ENCODE measurements at regions of chr19 and their contacts with region 1.

Region 1: GRCh38 chr19:58362272-58362994 is at the start of gene ZNF497:
- DNase-seq: peak; percentile 99
- ATAC-seq: peak; percentile 83
- H3K4me3 ChIP-seq: peak within 1 kb of the TSS; percentile 69 to 90 (median 74)
- H3K4me3 Mint-ChIP-seq: peak within 1 kb of the TSS; percentile 95
- H3K27ac ChIP-seq: peak within 1 kb of the TSS; percentile 80 to 81
- H3K27ac Mint-ChIP-seq: peak within 1 kb of the TSS; percentile 97
- H3K4me1 ChIP-seq: peaks cover 11 to 30% of the 10 kb centered on the region in 2 donors
- H3K4me1 Mint-ChIP-seq: peaks cover 17% of the 10 kb centered on the region
- H3K27me3 ChIP-seq: peaks cover 0 to 13% (median 5%) of the 10 kb centered on the region in 4 experiments
- H3K27me3 Mint-ChIP-seq: peaks cover 3% of the 10 kb centered on the region
- CTCF ChIP-seq: no peak
- total RNA-seq, gene ZNF497: 2.7 and 4.4 TPM in 2 replicates

Region 2: DNA sequence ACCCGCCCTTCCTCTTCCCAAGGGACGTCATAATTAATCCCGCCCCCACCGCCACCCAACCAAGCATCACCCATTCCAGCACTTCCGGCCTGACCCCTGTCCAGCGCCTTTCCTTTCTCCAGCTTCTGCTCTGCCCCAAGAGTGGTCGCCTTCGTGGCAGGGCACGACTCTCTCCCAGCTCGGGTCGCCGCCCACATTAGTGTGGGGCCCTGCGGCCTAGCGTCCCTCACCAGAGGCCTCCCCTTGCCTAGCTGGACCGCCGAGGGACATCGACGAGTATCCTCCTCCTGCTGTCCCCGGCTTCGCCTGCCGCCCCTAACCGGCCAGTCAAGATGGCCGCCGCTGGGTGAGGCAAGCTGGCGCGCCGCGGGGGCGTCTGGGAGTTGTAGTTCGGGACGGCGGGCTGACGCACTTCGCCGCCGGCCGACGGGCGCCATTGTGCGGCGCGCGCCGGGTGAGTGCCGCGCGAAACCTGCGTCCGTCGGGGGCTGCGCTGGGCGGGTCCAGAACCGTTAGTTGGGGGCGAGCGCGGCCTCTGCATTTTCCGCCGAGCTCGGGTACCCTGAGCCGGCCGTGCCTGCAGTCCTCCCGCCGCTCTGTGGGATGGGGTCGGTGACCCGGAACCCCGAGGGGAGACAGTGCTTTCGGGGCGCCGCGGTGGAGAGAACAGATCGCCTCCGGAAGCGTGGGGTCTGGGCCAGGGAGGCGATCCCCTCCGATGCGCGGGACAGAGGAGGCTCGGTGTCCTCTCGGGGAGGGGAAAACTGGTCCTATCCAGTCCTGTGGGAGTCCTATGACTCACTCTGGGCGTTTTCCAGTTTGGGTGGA is 179.2 kb before region 1 on chr19 and contains the start of gene ZNF274:
- CTCF ChIA-PET with region 1: no interaction called
- POLR2A ChIA-PET with region 1: interaction called, 7 read pairs
- intact Hi-C with region 1: loop called (anchors 1 kb)
- DNase-seq: peak; percentile 97
- ATAC-seq: peak; percentile 85
- H3K4me3 ChIP-seq: peak within 1 kb of the TSS; percentile 78 to 100 (median 88)
- H3K4me3 Mint-ChIP-seq: peak within 1 kb of the TSS; percentile 96
- H3K27ac ChIP-seq: peak within 1 kb of the TSS; percentile 99 to 100
- H3K27ac Mint-ChIP-seq: peak within 1 kb of the TSS; percentile 100
- H3K4me1 ChIP-seq: peaks cover 12 to 20% of the 10 kb centered on the region in 2 donors
- H3K4me1 Mint-ChIP-seq: peaks cover 26% of the 10 kb centered on the region
- H3K27me3 ChIP-seq: no peaks in the 10 kb centered on the region
- H3K27me3 Mint-ChIP-seq: no peaks in the 10 kb centered on the region
- CTCF ChIP-seq: no peak
- total RNA-seq, gene ZNF274: 83.7 and 85.4 TPM in 2 replicates

Region 3: DNA sequence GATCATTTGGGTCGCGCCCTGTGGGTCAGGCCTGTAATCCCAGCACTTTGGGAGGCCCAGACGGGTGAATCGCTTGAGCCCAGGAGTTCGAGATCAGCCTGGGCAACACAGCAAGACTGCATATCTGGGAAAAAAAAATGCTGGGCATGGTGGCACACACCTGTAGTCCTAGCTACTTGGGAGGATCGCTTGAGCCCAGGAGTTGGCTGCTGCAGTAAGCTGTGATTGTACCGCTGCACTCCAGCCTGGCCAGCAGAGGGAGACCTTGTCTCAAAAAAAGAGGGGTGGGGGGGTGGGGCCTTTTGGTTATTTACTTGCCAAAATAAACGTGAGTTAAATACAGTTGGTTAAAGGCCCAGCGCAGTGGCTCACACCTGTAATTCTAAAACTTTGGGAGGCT is 143.5 kb before region 1 on chr19:
- CTCF ChIA-PET with region 1: no interaction called
- POLR2A ChIA-PET with region 1: no interaction called
- intact Hi-C with region 1: no loop called
- DNase-seq: peak; percentile 27
- ATAC-seq: no peak
- H3K4me3 ChIP-seq: no peak overlapping the region
- H3K4me3 Mint-ChIP-seq: no peak overlapping the region
- H3K27ac ChIP-seq: no peak overlapping the region
- H3K27ac Mint-ChIP-seq: no peak overlapping the region
- H3K4me1 ChIP-seq: no peaks in the 10 kb centered on the region
- H3K4me1 Mint-ChIP-seq: no peaks in the 10 kb centered on the region
- H3K27me3 ChIP-seq: peaks cover 0 to 3% (median 0%) of the 10 kb centered on the region in 4 experiments
- H3K27me3 Mint-ChIP-seq: peaks cover 3% of the 10 kb centered on the region
- CTCF ChIP-seq: peak; percentile 22

Region 4: DNA sequence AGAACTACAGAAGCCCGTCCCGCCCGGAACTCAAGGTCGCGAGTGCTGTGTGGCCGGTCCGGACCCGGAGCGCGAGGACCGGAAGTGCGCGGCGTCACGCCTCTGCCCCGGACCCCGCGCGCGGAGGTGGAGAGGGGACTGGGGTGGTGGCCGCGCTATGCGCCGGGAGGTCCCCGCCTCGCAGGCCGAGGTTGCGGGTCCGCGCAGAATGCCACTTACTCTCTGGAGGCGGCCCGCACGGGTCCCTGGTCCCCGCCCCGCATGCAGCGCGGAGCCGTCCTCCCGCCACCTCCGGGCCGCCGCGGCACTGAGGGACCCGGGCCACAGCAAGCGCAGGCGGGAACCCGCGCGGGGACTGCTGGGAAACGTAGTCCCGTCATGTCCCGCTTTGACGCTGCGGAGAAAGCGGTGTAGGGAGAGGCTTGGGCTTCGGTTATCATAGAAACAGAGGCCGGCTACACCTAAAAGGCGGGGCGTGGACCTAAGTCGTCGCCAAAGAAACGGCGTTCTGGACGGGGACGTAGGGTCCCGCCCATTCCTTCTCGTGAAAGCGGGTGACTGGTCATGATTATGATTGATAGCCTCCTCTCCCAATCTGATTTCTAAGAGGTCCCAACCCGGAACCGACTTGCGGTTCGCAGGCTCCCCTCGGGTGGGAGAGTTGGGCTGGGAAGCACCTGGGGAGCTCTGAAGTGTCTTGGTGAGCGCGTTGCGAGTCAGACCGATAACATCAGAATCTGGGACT is 18.5 kb after region 1 on chr19 and contains the start of gene ZNF837:
- CTCF ChIA-PET with region 1: interaction called, 4 read pairs
- POLR2A ChIA-PET with region 1: interaction called, 35 read pairs
- intact Hi-C with region 1: loop called (anchors 1 kb)
- DNase-seq: peak; percentile 100
- ATAC-seq: peak; percentile 86
- H3K4me3 ChIP-seq: peak within 1 kb of the TSS; percentile 22 to 78 (median 71)
- H3K4me3 Mint-ChIP-seq: peak within 1 kb of the TSS; percentile 92
- H3K27ac ChIP-seq: peak within 1 kb of the TSS; percentile 89 to 97
- H3K27ac Mint-ChIP-seq: peak within 1 kb of the TSS; percentile 95
- H3K4me1 ChIP-seq: peaks cover 27 to 35% of the 10 kb centered on the region in 2 donors
- H3K4me1 Mint-ChIP-seq: peaks cover 32% of the 10 kb centered on the region
- H3K27me3 ChIP-seq: no peaks in the 10 kb centered on the region
- H3K27me3 Mint-ChIP-seq: no peaks in the 10 kb centered on the region
- CTCF ChIP-seq: no peak
- total RNA-seq, gene ZNF837: 3.1 and 4.2 TPM in 2 replicates

Region 5: GRCh38 chr19:58408152-58409009 is 45.9 kb after region 1 on chr19 and contains the start of gene ZNF584:
- CTCF ChIA-PET with region 1: interaction called, 4 read pairs
- POLR2A ChIA-PET with region 1: interaction called, 9 read pairs
- intact Hi-C with region 1: loop called (anchors 1 kb)
- DNase-seq: peak; percentile 96
- ATAC-seq: peak; percentile 96
- H3K4me3 ChIP-seq: peak within 1 kb of the TSS; percentile 58 to 93 (median 83)
- H3K4me3 Mint-ChIP-seq: peak within 1 kb of the TSS; percentile 97
- H3K27ac ChIP-seq: peak within 1 kb of the TSS; percentile 82 to 93
- H3K27ac Mint-ChIP-seq: peak within 1 kb of the TSS; percentile 98
- H3K4me1 ChIP-seq: peaks cover 11 to 20% of the 10 kb centered on the region in 2 donors
- H3K4me1 Mint-ChIP-seq: peaks cover 33% of the 10 kb centered on the region
- H3K27me3 ChIP-seq: no peaks in the 10 kb centered on the region
- H3K27me3 Mint-ChIP-seq: no peaks in the 10 kb centered on the region
- CTCF ChIP-seq: no peak
- total RNA-seq, gene ZNF584: 12.3 and 14.0 TPM in 2 replicates

Region 6: DNA sequence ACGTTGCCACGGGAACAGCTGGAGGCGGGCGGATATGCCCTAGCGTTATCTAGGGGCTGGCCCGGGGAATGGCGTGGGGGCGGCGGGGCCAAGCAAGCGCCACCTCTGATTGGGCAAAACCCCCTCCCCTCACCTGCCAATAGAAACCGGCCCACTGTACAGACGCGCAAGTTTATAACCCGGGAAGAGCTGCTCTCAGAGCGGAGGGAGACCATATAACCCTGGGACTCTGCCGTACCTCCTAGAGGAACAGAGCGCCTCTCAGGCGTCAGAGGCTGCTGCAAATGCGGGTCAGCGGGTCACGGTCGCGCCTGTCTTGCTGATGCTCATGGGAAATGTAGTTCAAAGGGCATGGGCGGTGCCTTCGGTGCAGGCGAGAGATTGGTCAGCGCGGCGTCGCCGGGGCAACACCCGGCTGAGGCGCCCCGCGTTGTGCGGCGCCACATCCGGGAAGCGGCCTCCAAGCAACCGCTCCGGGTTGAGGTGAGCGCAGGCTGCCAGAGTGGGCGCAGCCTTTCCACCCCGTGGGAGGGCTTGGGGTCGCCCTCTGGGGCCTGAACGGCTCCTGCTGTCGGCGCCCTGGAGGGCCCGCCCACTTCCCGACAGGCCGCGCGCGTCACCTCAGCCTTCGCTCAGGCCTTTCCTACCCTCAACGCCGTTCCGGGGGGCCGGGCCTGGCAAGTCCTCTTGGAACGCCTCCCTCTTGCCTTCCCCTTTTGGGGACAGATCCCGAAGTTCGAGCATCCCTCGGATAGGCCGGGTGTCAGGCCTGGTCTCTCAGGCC is 113.5 kb after region 1 on chr19 and contains the start of gene ZNF446:
- CTCF ChIA-PET with region 1: no interaction called
- POLR2A ChIA-PET with region 1: no interaction called
- intact Hi-C with region 1: loop called (anchors 5 kb)
- DNase-seq: peak; percentile 97
- ATAC-seq: peak; percentile 89
- H3K4me3 ChIP-seq: peak within 1 kb of the TSS; percentile 39 to 85 (median 70)
- H3K4me3 Mint-ChIP-seq: peak within 1 kb of the TSS; percentile 98
- H3K27ac ChIP-seq: peak within 1 kb of the TSS; percentile 82 to 89
- H3K27ac Mint-ChIP-seq: peak within 1 kb of the TSS; percentile 98
- H3K4me1 ChIP-seq: peaks cover 14 to 18% of the 10 kb centered on the region in 2 donors
- H3K4me1 Mint-ChIP-seq: peaks cover 20% of the 10 kb centered on the region
- H3K27me3 ChIP-seq: no peaks in the 10 kb centered on the region
- H3K27me3 Mint-ChIP-seq: no peaks in the 10 kb centered on the region
- CTCF ChIP-seq: no peak
- total RNA-seq, gene ZNF446: 15.0 and 18.5 TPM in 2 replicates

Region 7: DNA sequence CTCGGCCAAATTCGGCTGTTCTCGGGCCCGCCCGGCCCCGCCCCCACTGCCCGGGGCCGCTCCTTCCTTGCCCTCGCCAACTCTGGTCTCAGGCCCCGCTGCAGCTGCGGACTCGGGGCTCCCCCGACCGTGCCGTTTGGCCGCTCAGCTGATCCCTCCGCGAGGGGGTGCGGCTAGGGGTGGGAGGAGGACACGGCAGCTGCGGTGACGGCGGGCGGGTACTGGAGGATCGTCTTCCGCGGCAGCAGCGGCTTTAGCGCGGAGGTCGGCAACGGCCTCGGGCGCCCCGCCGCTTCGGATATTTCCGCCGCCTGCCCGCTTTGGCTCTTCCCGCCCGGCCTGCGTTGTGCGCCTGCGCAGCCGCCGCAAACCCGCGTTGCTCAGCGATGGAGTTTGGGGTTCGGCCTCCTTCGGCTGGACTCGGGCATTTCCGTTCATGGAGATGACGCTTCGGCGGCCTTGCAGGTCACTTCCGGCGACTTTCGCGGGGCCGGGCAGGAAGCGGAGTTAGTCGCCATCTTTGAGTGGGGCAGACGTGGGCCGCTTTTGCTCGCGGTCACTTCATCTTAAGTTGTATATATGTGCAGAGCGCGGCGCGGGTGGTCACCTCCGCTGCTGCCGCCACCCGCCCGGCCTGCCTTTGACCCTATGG is 196.3 kb after region 1 on chr19:
- CTCF ChIA-PET with region 1: no interaction called
- POLR2A ChIA-PET with region 1: interaction called, 3 read pairs
- intact Hi-C with region 1: loop called (anchors 1 kb)
- DNase-seq: peak; percentile 99
- ATAC-seq: peak; percentile 71
- H3K4me3 ChIP-seq: peak overlapping the region; percentile 57 to 95 (median 85)
- H3K4me3 Mint-ChIP-seq: peak overlapping the region; percentile 96
- H3K27ac ChIP-seq: peak overlapping the region; percentile 74 to 98
- H3K27ac Mint-ChIP-seq: peak overlapping the region; percentile 98
- H3K4me1 ChIP-seq: peaks cover 48 to 68% of the 10 kb centered on the region in 2 donors
- H3K4me1 Mint-ChIP-seq: peaks cover 80% of the 10 kb centered on the region
- H3K27me3 ChIP-seq: no peaks in the 10 kb centered on the region
- H3K27me3 Mint-ChIP-seq: no peaks in the 10 kb centered on the region
- CTCF ChIP-seq: no peak

Region 8: DNA sequence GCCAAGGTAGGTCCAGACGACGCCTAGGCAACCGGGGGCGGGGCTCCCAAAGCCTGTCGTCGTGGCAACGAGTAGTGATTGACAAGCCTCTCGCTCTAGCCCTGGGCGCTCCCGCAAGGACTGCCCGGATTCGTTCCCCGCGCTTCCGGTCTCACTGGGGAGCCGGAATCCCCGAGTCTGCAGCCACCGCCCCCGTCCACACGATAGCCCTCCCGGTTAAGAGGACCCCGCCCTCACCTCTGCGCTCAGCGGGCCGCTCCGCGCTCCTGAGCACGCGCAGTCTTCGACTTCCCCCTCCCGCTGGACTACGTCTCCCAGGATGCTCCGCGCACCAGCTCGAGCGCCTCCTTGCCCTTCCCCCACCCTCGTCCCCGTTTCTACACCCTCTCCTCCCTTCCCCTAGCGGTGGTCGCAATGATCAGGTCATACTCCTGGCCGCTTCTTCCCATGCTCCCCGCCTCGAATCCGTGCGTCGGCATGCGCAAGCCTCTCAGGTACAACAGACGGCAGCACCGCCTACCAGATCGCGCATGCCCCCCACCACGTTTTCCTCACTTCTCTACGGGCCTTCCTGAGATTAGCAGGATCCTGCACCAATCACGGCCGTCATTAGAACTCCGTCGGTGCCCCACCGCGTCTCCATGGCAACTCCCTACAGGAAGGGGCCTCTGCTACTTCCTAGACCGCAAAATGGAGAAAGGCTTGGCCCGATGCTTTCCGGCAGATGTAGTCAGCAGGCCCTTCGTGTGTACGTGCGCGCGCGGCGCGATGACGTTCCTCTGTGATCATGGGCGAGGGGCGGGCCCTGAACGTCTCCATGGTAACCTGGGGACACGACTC is 210.6 kb after region 1 on chr19 and contains the start of gene MZF1:
- CTCF ChIA-PET with region 1: no interaction called
- POLR2A ChIA-PET with region 1: no interaction called
- intact Hi-C with region 1: no loop called
- DNase-seq: peak; percentile 100
- ATAC-seq: peak; percentile 62
- H3K4me3 ChIP-seq: peak within 1 kb of the TSS; percentile 59 to 77 (median 74)
- H3K4me3 Mint-ChIP-seq: peak within 1 kb of the TSS; percentile 95
- H3K27ac ChIP-seq: peak within 1 kb of the TSS; percentile 99
- H3K27ac Mint-ChIP-seq: peak within 1 kb of the TSS; percentile 99
- H3K4me1 ChIP-seq: peaks cover 25 to 37% of the 10 kb centered on the region in 2 donors
- H3K4me1 Mint-ChIP-seq: peaks cover 41% of the 10 kb centered on the region
- H3K27me3 ChIP-seq: no peaks in the 10 kb centered on the region
- H3K27me3 Mint-ChIP-seq: no peaks in the 10 kb centered on the region
- CTCF ChIP-seq: no peak
- total RNA-seq, gene MZF1: 79.4 and 81.4 TPM in 2 replicates